Dendritic cell treated with granulocyte-macrophage colony-stimulating factor and Interleukin-4, amounts not matched to agents 40 ng/mL and 50 ng/mL, for 4 days (primary cell): ENCODE measurements at regions of chr19 and their contacts with region 1.

Region 1: GRCh38 chr19:55407800-55408532 is 378 bp upstream of the UBE2S start:
- H3K4me3 Mint-ChIP-seq: peak overlapping the region; percentile 83
- H3K27ac Mint-ChIP-seq: peak overlapping the region; percentile 98
- H3K4me1 Mint-ChIP-seq: peaks cover 19% of the 10 kb centered on the region
- H3K27me3 Mint-ChIP-seq: peaks cover 1% of the 10 kb centered on the region

Region 2: DNA sequence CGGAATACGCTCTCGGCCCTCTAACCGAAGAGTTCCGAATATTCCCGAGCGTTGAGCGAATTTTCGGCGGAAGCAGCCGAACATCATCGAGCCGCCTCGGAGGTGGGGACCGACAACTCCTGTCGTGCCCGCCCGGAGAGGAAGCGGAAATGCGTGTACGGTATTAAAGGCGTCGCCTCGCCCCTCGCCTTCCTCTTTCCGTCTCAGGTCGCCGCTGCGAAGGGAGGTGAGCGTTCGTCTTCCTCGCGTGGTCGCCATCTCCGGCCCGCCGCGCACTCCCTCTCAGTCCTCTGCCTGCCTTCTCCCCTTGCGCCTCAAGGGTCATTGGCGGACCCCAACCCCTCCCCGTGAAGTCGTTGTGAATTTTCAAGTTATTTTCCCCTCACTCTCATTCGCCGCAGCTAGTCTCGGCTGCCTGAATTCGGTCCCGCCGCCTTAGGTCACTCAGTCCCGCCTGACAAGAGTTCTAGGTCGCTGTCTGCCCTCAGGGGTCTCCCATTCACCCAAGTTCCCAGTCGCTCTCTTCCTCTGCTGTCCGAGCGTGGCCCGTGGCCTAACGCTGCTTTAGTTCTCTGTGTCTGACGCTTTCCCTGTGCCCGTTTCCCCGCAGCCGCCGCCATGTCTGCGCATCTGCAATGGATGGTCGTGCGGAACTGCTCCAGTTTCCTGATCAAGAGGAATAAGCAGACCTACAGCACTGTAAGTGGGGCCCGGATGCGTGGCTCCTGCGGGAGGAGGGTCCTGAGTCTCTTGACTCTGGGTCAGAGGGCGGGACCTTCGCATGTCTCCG is 22.0 kb before region 1 on chr19 and contains the start of gene RPL28:
- intact Hi-C with region 1: loop called (anchors 2 kb)
- H3K4me3 Mint-ChIP-seq: peak within 1 kb of the TSS; percentile 91
- H3K27ac Mint-ChIP-seq: peak within 1 kb of the TSS; percentile 95
- H3K4me1 Mint-ChIP-seq: peaks cover 72% of the 10 kb centered on the region
- H3K27me3 Mint-ChIP-seq: peaks cover 12% of the 10 kb centered on the region